ENCODE measurements at regions of chr11 and their contacts with region 1.

Region 1: DNA sequence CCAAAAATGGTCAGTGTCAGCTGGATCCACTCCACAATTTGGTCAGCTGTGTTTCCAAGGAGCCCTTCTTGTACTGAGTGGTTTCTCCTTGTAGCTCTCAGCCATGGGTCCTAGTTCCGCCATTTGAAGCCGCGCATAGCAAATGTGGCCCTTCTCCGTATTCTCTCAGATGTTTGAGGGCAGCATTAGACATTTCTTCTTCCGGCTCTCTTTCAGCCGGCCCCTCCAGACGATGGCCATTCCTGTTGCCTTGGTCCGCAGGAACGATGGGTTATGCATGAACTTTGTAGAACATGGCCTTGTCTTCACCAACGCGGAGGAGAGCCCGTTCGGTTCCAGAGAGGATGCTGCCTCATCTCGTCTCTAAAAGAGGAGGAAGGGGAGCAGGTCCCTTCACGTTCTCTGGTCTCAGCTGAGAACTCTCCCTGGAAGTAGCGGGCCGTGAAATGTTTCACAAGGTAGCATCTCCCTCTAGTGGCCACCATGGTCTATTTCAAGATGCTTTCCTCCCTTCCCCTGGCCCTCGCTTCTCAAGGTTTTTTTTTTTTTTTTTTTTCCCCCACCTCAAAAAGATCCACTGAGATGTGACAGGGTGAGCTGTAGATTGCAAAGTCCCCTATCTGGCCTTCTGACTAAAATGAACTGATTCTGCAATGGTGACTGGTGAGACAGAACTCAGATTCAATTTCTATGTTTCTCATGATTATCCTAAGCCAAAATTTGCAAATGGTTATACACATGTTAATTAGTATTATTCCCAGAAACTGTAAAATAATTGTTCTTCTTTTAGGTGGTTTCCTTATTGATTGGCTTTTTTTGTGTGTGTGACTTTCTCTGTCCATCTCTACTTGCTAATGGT is 19.8 kb upstream of the PLET1 start:
- DNase-seq: peak; percentile 76 to 81
- H3K4me3 ChIP-seq: peak overlapping the region; percentile 17
- H3K4me1 ChIP-seq: peaks cover 4% of the 10 kb centered on the region
- H3K27me3 ChIP-seq: peaks cover 8% of the 10 kb centered on the region

Region 2: GRCh38 chr11:111977146-111978027 is 303.1 kb before region 1 on chr11:
- in situ Hi-C with region 1: no loop called
- DNase-seq: no peak
- H3K4me3 ChIP-seq: no peak overlapping the region
- H3K4me1 ChIP-seq: peaks cover 5% of the 10 kb centered on the region
- H3K27me3 ChIP-seq: no peaks in the 10 kb centered on the region

Region 3: GRCh38 chr11:112219476-112220232 is 60.8 kb before region 1 on chr11:
- in situ Hi-C with region 1: loop called (anchors 5 kb)
- DNase-seq: peak; percentile 48 to 56
- H3K4me3 ChIP-seq: no peak overlapping the region
- H3K4me1 ChIP-seq: no peaks in the 10 kb centered on the region
- H3K27me3 ChIP-seq: no peaks in the 10 kb centered on the region; the same call in 1 of the 2 replicates

Region 4: GRCh38 chr11:112555491-112556364 is 275.2 kb after region 1 on chr11:
- in situ Hi-C with region 1: loop called (anchors 25 kb)
- DNase-seq: peak in 1 of 2 experiments; percentile 73
- H3K4me3 ChIP-seq: no peak overlapping the region
- H3K4me1 ChIP-seq: 0 out of 2 replicates have a peak, but pooled peaks cover 2% of the 10 kb centered on the region
- H3K27me3 ChIP-seq: no peaks in the 10 kb centered on the region

Region 5: GRCh38 chr11:113289431-113290187 is 1009.1 kb after region 1 on chr11:
- in situ Hi-C with region 1: loop called (anchors 10 kb)
- DNase-seq: peak; percentile 23 to 65
- H3K4me3 ChIP-seq: no peak overlapping the region
- H3K4me1 ChIP-seq: no peaks in the 10 kb centered on the region
- H3K27me3 ChIP-seq: peaks cover 12% of the 10 kb centered on the region; the same call in 1 of the 2 replicates